WTC11 (cell line): ENCODE measurements at regions of chrX and their contacts with region 1.

Region 1: DNA sequence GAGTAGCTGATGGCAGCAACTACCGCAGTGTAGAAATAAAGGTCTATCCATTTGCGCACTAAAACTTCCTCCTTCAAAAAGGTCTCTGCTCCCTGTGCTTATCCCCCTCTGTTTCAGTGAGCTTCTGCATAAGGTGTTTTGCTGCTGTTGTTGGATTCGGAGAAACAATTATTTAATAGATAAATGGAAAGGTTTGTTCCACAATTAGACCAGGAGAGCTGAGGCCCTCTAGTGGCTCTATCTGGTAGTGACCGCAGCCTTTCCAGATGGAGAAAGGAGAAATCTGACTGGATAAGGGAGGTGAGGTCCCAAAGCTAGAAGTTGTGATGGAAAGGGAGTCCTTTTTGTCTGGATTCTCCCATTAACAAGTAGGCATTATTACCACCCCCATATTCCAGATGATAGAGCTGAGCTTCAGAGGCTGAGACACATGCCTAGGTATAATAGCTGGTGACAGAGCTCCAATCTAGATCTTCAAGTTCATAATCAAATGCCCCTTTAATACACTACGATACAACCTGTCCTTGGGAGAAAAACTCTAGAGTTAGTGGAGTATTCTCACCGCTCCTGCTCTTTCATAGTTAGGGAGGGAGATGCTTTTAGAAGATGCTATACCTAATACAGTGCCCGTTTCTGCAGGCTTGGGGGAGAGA is 5.1 kb upstream of the GABRQ start:
- DNase-seq: peak; percentile 62
- ATAC-seq: no peak
- H3K4me3 Mint-ChIP-seq: no peak overlapping the region
- H3K27ac Mint-ChIP-seq: no peak overlapping the region
- H3K4me1 Mint-ChIP-seq: peaks cover 12% of the 10 kb centered on the region
- H3K27me3 Mint-ChIP-seq: peaks cover 9% of the 10 kb centered on the region; the same call in 1 of the 2 replicates
- CTCF ChIP-seq: peak; percentile 67

Region 2: GRCh38 chrX:151753313-151754041 is 879.1 kb before region 1 on chrX:
- CTCF ChIA-PET with region 1: interaction called, 22 read pairs
- POLR2A ChIA-PET with region 1: no interaction called
- DNase-seq: peak; percentile 60
- ATAC-seq: peak; percentile 82
- H3K4me3 Mint-ChIP-seq: no peak overlapping the region
- H3K27ac Mint-ChIP-seq: no peak overlapping the region
- H3K4me1 Mint-ChIP-seq: peaks cover 19% of the 10 kb centered on the region
- H3K27me3 Mint-ChIP-seq: peaks cover 6% of the 10 kb centered on the region
- CTCF ChIP-seq: peak; percentile 68

Region 3: DNA sequence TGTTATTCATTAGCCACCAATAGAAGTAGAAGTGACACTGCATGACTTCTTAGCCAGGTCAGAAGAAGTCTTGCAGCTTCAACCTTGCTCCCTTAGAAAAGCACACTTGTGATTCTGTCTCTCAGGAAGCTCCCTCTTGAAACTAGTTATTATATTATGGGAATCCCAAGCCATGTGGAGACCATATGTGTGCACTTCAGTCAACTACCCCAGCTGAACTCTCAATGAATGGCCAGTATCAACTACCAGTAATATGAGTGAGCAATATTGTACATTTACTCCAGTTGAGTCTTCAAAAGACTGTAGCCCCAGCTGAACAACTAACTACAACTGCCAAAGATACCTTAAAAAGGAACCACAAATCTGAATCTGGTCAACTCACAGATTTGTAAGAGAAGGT is 104.4 kb before region 1 on chrX:
- CTCF ChIA-PET with region 1: no interaction called
- POLR2A ChIA-PET with region 1: no interaction called
- DNase-seq: no peak
- ATAC-seq: no peak
- H3K4me3 Mint-ChIP-seq: no peak overlapping the region
- H3K27ac Mint-ChIP-seq: no peak overlapping the region
- H3K4me1 Mint-ChIP-seq: no peaks in the 10 kb centered on the region
- H3K27me3 Mint-ChIP-seq: peaks cover 3% of the 10 kb centered on the region; the same call in 1 of the 2 replicates
- CTCF ChIP-seq: no peak

Region 4: GRCh38 chrX:152601848-152602612 is 30.5 kb before region 1 on chrX:
- CTCF ChIA-PET with region 1: interaction called, 29 read pairs
- POLR2A ChIA-PET with region 1: no interaction called
- DNase-seq: peak; percentile 19
- ATAC-seq: peak; percentile 60; the same call in 1 of the 2 replicates
- H3K4me3 Mint-ChIP-seq: no peak overlapping the region
- H3K27ac Mint-ChIP-seq: no peak overlapping the region
- H3K4me1 Mint-ChIP-seq: peaks cover 4% of the 10 kb centered on the region
- H3K27me3 Mint-ChIP-seq: no peaks in the 10 kb centered on the region; the same call in 1 of the 2 replicates
- CTCF ChIP-seq: no peak